ENCODE measurements at regions of chr10 and their contacts with region 1.

Region 1: DNA sequence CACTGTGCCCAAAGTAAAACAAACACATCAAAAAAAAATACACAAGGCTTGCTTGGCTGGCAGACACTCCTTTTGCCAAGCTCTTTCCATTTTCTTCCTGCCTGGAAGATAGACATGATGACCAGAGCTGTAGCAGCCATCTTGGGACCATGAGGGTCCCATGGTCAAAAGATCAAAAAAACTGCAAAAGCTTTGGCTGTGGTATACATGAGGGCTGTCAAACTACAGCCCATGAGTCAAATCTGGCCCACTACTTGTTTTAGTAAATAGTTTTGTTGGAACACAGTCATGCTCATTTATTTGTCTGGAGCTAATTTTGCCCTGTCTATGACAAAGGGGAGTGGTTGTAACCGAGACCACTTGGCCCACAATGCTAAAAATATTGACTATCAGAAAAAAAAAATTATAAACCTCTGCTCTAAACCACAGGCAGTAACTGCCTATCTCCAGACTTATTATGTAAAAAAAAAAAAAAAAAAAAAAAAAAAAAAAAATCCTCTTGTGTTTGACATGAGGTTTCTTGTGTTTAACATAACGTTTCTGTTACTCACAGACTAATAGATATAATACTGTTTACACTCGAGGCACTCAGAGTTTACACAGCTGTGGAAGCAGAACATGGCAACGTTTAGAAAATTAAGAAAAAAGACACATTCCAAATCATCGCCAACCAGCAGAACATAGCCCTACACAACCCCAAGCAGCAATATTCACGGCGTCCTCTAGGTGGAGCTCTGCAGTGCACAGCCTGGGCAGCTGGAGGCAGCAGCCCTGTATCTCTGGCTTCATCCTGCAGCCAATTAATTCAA is 36.9 kb downstream of the ASB13 start:
- DNase-seq: peak; percentile 36 to 71
- ATAC-seq: peak; percentile 27 to 53
- H3K4me3 ChIP-seq: peak overlapping the region in 2 of 4 donors; percentile 26 to 28
- H3K27ac ChIP-seq: peak overlapping the region in 2 of 4 donors; percentile 57 to 73
- H3K4me1 ChIP-seq: peaks cover 18 to 22% of the 10 kb centered on the region in 2 donors
- H3K27me3 ChIP-seq: no peaks in the 10 kb centered on the region
- CTCF ChIP-seq: peak; percentile 55 to 92 (median 73)
- POLR2A ChIP-seq: no peak

Region 2: DNA sequence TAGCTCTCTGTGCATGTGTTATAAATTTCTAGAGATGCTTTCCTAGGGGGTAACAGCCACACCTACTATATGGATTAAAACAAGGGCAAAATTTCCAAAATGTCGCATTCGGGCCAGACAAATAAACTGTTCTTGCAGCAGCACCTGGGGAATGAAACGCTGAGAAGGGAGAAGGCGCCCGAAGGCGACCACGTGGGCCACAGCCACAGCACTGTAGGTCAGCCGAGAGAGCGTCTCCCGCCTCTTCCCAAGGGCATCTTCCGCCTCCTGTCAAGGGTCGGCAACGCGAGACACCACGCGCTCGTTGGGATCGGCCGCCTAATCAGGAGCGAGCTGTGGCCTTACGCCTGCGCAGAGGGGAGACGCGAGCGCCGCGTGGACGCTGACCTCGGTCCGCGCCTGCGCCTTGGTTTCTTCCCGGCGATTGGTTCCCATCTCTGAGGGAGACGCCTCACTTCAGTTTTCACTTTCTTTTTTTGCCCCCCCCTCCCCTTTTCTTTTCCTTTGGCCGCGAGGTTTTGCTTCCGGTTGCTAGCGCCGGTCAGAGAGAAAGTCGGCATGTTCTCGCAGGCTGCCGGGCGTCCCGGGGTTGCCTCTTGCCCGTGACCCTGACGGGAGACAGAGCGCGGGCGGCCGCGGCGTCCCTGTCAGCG is 54.9 kb after region 1 on chr10 and contains the start of gene TASOR2:
- in situ Hi-C with region 1: no loop called
- intact Hi-C with region 1: no loop called
- DNase-seq: peak; percentile 95 to 97
- ATAC-seq: peak; percentile 95 to 96
- H3K4me3 ChIP-seq: peak within 1 kb of the TSS; percentile 72 to 98 (median 90)
- H3K27ac ChIP-seq: peak within 1 kb of the TSS; percentile 88 to 96 (median 92)
- H3K4me1 ChIP-seq: peaks cover 19 to 24% of the 10 kb centered on the region in 2 donors
- H3K27me3 ChIP-seq: no peaks in the 10 kb centered on the region
- CTCF ChIP-seq: no peak
- POLR2A ChIP-seq: peak; percentile 76 to 79
- total RNA-seq, gene TASOR2: 32.0 to 78.0 (median 50.0) TPM

Region 3: GRCh38 chr10:5873515-5873995 is 244.0 kb after region 1 on chr10:
- in situ Hi-C with region 1: no loop called
- intact Hi-C with region 1: loop called (anchors 5 kb)
- DNase-seq: peak in 1 of 2 donors; percentile 52
- ATAC-seq: peak; percentile 74 to 84
- H3K4me3 ChIP-seq: no peak overlapping the region
- H3K27ac ChIP-seq: no peak overlapping the region
- H3K4me1 ChIP-seq: peaks cover 0 to 4% of the 10 kb centered on the region in 2 donors
- H3K27me3 ChIP-seq: no peaks in the 10 kb centered on the region
- CTCF ChIP-seq: peak; percentile 49 to 71 (median 69)
- POLR2A ChIP-seq: no peak